ENCODE measurements at regions of chr7 and their contacts with region 1.

Region 1: DNA sequence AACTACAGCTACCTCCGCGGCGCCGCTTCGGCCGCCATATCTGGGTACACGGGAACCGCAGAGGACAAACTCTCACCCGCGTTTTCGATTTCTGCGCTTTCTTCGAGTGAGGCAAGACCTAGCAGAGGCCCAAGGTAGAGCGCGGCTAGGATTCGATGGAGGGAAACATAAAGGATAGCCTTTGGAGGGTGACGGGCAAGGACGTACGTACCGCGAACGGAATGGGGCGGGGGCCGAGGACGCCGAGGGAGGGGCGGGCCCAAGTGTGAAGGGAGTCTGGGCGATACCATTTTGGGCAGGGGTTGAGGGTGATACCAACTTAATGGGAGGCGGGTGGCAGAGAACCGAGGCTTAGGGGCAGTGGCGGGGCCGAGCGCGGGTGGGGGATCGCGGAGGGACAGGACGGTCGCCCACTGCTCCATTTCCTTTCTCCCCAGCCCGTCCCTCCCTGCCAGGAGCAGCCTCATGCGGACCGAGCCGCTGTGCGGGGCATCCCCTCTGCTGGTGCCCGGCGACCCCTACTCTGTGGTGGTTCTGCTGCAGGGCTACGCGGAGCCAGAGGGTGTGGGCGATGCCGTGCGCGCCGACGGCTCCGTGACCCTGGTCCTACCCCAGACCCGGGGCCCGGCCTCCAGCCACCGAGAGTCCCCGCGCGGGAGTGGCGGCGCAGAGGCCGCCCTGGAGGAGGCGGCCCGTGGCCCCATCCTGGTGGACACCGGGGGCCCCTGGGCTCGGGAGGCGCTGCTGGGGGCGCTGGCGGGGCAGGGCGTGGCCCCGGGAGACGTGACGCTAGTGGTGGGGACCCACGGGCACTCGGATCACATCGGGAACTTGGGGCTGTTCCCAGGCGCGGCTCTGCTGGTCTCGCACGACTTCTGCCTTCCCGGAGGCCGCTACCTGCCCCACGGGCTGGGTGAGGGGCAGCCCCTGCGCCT is at the start of gene MBLAC1:
- DNase-seq: peak; percentile 93
- H3K4me3 Mint-ChIP-seq: peak within 1 kb of the TSS; percentile 95
- H3K27ac Mint-ChIP-seq: peak within 1 kb of the TSS; percentile 96
- H3K4me1 Mint-ChIP-seq: peaks cover 28% of the 10 kb centered on the region
- H3K27me3 Mint-ChIP-seq: no peaks in the 10 kb centered on the region
- total RNA-seq, gene MBLAC1: 2.3 to 3.4 TPM

Region 2: DNA sequence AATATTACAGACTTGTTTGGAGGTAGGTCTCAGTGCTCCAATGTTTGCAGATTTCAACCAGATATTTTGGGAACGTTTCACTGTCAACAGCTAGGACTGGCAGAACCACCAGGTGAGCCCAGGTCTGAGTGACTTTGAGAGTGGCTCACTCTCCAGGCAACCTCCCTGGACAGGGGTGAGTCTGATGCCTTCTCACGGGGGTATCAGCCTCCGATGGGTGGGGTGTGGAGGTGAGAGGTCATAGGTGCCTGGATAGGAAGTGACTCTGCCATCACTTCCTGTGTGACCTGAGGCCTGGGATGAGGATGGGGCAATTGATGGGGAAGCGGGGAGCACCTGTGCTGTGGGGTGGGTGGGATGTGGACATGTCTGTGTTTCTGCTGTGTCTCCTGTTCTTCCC is 156.0 kb before region 1 on chr7:
- CTCF ChIA-PET with region 1: no interaction called
- POLR2A ChIA-PET with region 1: no interaction called
- intact Hi-C with region 1: no loop called
- DNase-seq: no peak
- H3K4me3 Mint-ChIP-seq: no peak overlapping the region
- H3K27ac Mint-ChIP-seq: no peak overlapping the region
- H3K4me1 Mint-ChIP-seq: no peaks in the 10 kb centered on the region
- H3K27me3 Mint-ChIP-seq: peaks cover 9% of the 10 kb centered on the region

Region 3: DNA sequence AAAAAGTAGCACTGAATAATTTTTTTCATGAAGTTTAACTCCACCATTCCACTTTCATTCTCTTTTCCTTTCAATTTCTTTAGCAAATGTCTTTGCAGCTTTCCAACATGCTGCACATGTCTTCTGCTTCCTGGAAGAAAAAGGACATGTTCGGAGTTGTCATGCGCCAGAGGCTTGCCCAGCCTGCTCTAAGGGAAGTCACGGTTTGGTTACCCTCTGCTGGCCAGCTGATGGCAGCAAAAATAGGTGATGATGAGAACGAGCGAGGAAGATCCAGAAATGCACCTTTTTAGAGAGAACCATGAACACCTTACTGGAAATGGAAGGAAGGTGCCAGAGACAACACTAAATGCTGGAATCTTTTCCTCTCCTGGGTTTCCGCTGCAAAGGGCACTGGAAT is 82.5 kb before region 1 on chr7:
- CTCF ChIA-PET with region 1: no interaction called
- POLR2A ChIA-PET with region 1: no interaction called
- intact Hi-C with region 1: no loop called
- DNase-seq: peak; percentile 23
- H3K4me3 Mint-ChIP-seq: no peak overlapping the region
- H3K27ac Mint-ChIP-seq: no peak overlapping the region
- H3K4me1 Mint-ChIP-seq: peaks cover 10% of the 10 kb centered on the region
- H3K27me3 Mint-ChIP-seq: no peaks in the 10 kb centered on the region

Region 4: DNA sequence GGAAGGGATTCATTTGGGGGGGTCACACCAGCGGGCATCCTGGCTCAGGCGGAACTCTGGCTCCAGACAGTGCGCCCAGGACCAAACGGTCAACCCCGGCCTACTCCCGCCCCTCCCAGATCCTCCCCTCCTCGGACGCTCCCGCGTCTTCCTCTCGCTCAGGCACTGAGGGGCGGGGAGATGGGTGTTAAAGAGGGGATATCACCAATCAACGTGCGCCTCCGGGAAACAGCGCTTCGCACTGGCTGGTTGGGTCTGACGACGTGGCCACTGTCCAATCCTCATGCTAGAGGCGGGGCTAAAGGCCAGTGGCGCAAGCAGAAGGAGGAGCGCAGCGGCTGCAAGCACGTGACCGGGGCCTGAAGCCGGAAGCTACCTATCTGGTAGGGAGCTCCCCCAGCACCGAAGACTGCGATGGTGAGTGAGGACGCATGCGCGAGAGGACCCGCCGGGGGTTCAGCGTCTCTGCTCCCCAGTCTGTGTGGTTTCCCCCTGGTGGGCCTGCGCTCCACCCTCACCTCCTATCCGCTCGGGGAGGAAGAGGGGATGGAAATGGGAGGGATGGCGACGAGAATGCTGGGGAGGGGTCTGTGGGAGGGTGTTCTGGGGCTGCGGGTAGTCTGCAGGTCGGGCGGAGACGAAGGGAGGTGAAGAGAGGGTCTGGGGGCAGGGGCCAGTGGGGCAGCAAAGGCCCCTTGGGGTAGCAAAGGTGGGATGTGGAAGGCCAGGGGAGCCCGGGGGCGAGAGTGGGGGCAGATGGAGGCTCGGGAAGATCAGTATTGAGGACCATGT is 21.6 kb after region 1 on chr7 and contains the start of gene LAMTOR4:
- CTCF ChIA-PET with region 1: interaction called, 46 read pairs
- POLR2A ChIA-PET with region 1: interaction called, 4 read pairs
- intact Hi-C with region 1: loop called (anchors 2 kb)
- DNase-seq: peak; percentile 99
- H3K4me3 Mint-ChIP-seq: peak within 1 kb of the TSS; percentile 95
- H3K27ac Mint-ChIP-seq: peak within 1 kb of the TSS; percentile 94
- H3K4me1 Mint-ChIP-seq: peaks cover 25% of the 10 kb centered on the region
- H3K27me3 Mint-ChIP-seq: no peaks in the 10 kb centered on the region
- total RNA-seq, gene LAMTOR4: 136 to 151 TPM

Region 5: GRCh38 chr7:100604028-100604975 is 477.1 kb after region 1 on chr7:
- CTCF ChIA-PET with region 1: no interaction called
- POLR2A ChIA-PET with region 1: no interaction called
- intact Hi-C with region 1: no loop called
- DNase-seq: peak; percentile 85
- H3K4me3 Mint-ChIP-seq: peak overlapping the region; percentile 80
- H3K27ac Mint-ChIP-seq: peak overlapping the region; percentile 52
- H3K4me1 Mint-ChIP-seq: peaks cover 18% of the 10 kb centered on the region
- H3K27me3 Mint-ChIP-seq: no peaks in the 10 kb centered on the region

Measured in activated CD4-positive, alpha-beta memory T cell treated with anti-CD3 and anti-CD28 coated beads for 36 hours (primary cell).